ENCODE measurements at regions of chr3 and their contacts with region 1.

Region 1: GRCh38 chr3:50627407-50628051 is 10.6 kb downstream of the MAPKAPK3 start:
- DNase-seq: peak; percentile 91
- H3K4me3 ChIP-seq: peak overlapping the region in 1 of 3 experiments; percentile 4
- H3K27ac ChIP-seq: peak overlapping the region; percentile 62
- H3K4me1 ChIP-seq: peaks cover 100% of the 10 kb centered on the region
- H3K27me3 ChIP-seq: no peaks in the 10 kb centered on the region
- CTCF ChIP-seq: peak; percentile 55 to 59

Region 2: GRCh38 chr3:50568947-50569749 is 58.4 kb before region 1 on chr3 and contains the start of gene HEMK1:
- CTCF ChIA-PET with region 1: no interaction called
- dilution Hi-C with region 1: no loop called
- in situ Hi-C with region 1: no loop called
- intact Hi-C with region 1: no loop called
- DNase-seq: peak; percentile 89
- H3K4me3 ChIP-seq: peak within 1 kb of the TSS; percentile 86 to 97 (median 93)
- H3K27ac ChIP-seq: peak within 1 kb of the TSS; percentile 73
- H3K4me1 ChIP-seq: peaks cover 16% of the 10 kb centered on the region
- H3K27me3 ChIP-seq: no peaks in the 10 kb centered on the region
- CTCF ChIP-seq: no peak
- total RNA-seq, gene HEMK1: 14.2 to 23.1 TPM

Region 3: GRCh38 chr3:50652709-50653108 is 25.2 kb after region 1 on chr3:
- CTCF ChIA-PET with region 1: interaction called, 3 read pairs
- dilution Hi-C with region 1: no loop called
- in situ Hi-C with region 1: no loop called
- intact Hi-C with region 1: loop called (anchors 1 kb)
- DNase-seq: peak; percentile 36
- H3K4me3 ChIP-seq: no peak overlapping the region
- H3K27ac ChIP-seq: no peak overlapping the region
- H3K4me1 ChIP-seq: no peaks in the 10 kb centered on the region
- H3K27me3 ChIP-seq: no peaks in the 10 kb centered on the region
- CTCF ChIP-seq: peak; percentile 39 to 63

Measured in mammary epithelial cell (primary cell).